T-cell (primary cell): ENCODE measurements at regions of chr7 and their contacts with region 1.

Region 1: GRCh38 chr7:24521917-24522620 is 51.2 kb upstream of the PALS2 start:
- DNase-seq: no peak
- ATAC-seq: no peak
- H3K4me3 ChIP-seq: no peak overlapping the region
- H3K4me3 Mint-ChIP-seq: no peak overlapping the region
- H3K27ac ChIP-seq: no peak overlapping the region
- H3K27ac Mint-ChIP-seq: no peak overlapping the region
- H3K4me1 ChIP-seq: no peaks in the 10 kb centered on the region
- H3K4me1 Mint-ChIP-seq: no peaks in the 10 kb centered on the region
- H3K27me3 ChIP-seq: peaks cover 0 to 4% of the 10 kb centered on the region in 2 experiments
- H3K27me3 Mint-ChIP-seq: peaks cover 27 to 31% of the 10 kb centered on the region in 2 donors

Region 2: GRCh38 chr7:23672033-23672432 is 850.0 kb before region 1 on chr7:
- CTCF ChIA-PET with region 1: no interaction called
- POLR2A ChIA-PET with region 1: interaction called in 1 of 2 experiments, 13 read pairs
- DNase-seq: no peak
- ATAC-seq: no peak
- H3K4me3 ChIP-seq: no peak overlapping the region
- H3K4me3 Mint-ChIP-seq: no peak overlapping the region
- H3K27ac ChIP-seq: no peak overlapping the region
- H3K27ac Mint-ChIP-seq: no peak overlapping the region
- H3K4me1 ChIP-seq: no peaks in the 10 kb centered on the region
- H3K4me1 Mint-ChIP-seq: no peaks in the 10 kb centered on the region
- H3K27me3 ChIP-seq: peaks cover 0 to 4% of the 10 kb centered on the region in 2 experiments
- H3K27me3 Mint-ChIP-seq: peaks cover 3 to 16% of the 10 kb centered on the region in 2 donors

Region 3: GRCh38 chr7:24504836-24505235 is 17.2 kb before region 1 on chr7:
- CTCF ChIA-PET with region 1: interaction called in 1 of 2 experiments, 13 read pairs
- POLR2A ChIA-PET with region 1: interaction called in 1 of 2 experiments, 10 read pairs
- DNase-seq: no peak
- ATAC-seq: no peak
- H3K4me3 ChIP-seq: no peak overlapping the region
- H3K4me3 Mint-ChIP-seq: no peak overlapping the region
- H3K27ac ChIP-seq: no peak overlapping the region
- H3K27ac Mint-ChIP-seq: no peak overlapping the region
- H3K4me1 ChIP-seq: no peaks in the 10 kb centered on the region
- H3K4me1 Mint-ChIP-seq: no peaks in the 10 kb centered on the region
- H3K27me3 ChIP-seq: no peaks in the 10 kb centered on the region
- H3K27me3 Mint-ChIP-seq: peaks cover 0 to 3% of the 10 kb centered on the region in 2 donors

Region 4: DNA sequence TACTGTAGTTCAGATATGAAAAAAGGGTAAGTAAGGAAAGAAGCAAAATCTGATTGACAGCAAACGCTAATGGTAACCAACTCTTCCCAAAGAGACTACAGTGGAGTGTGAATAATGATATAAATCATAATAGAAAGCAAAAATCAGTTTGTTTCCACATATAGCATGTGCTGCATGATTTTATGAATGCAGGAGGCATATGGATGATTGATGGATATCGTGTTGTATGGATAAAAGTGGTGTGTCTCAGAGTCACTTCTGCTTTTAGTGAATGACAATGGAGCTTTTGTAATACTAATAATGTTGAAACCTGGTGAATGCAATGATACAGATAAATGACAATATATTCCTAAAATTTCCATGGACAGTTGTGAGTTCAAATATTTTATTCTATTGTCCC is 14.6 kb after region 1 on chr7:
- CTCF ChIA-PET with region 1: no interaction called
- POLR2A ChIA-PET with region 1: no interaction called
- DNase-seq: no peak
- ATAC-seq: no peak
- H3K4me3 ChIP-seq: no peak overlapping the region
- H3K4me3 Mint-ChIP-seq: no peak overlapping the region
- H3K27ac ChIP-seq: no peak overlapping the region
- H3K27ac Mint-ChIP-seq: no peak overlapping the region
- H3K4me1 ChIP-seq: no peaks in the 10 kb centered on the region
- H3K4me1 Mint-ChIP-seq: no peaks in the 10 kb centered on the region
- H3K27me3 ChIP-seq: no peaks in the 10 kb centered on the region
- H3K27me3 Mint-ChIP-seq: peaks cover under 1 to 6% of the 10 kb centered on the region in 2 donors

Region 5: GRCh38 chr7:24936121-24936824 is 414.2 kb after region 1 on chr7:
- CTCF ChIA-PET with region 1: no interaction called
- POLR2A ChIA-PET with region 1: no interaction called
- DNase-seq: no peak
- ATAC-seq: no peak
- H3K4me3 ChIP-seq: no peak overlapping the region
- H3K4me3 Mint-ChIP-seq: no peak overlapping the region
- H3K27ac ChIP-seq: no peak overlapping the region
- H3K27ac Mint-ChIP-seq: peak overlapping the region in 1 of 2 donors; percentile 35
- H3K4me1 ChIP-seq: no peaks in the 10 kb centered on the region
- H3K4me1 Mint-ChIP-seq: peaks cover 42 to 71% (median 69%) of the 10 kb centered on the region in 3 donors
- H3K27me3 ChIP-seq: no peaks in the 10 kb centered on the region
- H3K27me3 Mint-ChIP-seq: no peaks in the 10 kb centered on the region